Activated B cell treated with CpG ODN at 0.5 μM for 24 hours (primary cell): ENCODE measurements at regions of chr15 and their contacts with region 1.

Region 1: DNA sequence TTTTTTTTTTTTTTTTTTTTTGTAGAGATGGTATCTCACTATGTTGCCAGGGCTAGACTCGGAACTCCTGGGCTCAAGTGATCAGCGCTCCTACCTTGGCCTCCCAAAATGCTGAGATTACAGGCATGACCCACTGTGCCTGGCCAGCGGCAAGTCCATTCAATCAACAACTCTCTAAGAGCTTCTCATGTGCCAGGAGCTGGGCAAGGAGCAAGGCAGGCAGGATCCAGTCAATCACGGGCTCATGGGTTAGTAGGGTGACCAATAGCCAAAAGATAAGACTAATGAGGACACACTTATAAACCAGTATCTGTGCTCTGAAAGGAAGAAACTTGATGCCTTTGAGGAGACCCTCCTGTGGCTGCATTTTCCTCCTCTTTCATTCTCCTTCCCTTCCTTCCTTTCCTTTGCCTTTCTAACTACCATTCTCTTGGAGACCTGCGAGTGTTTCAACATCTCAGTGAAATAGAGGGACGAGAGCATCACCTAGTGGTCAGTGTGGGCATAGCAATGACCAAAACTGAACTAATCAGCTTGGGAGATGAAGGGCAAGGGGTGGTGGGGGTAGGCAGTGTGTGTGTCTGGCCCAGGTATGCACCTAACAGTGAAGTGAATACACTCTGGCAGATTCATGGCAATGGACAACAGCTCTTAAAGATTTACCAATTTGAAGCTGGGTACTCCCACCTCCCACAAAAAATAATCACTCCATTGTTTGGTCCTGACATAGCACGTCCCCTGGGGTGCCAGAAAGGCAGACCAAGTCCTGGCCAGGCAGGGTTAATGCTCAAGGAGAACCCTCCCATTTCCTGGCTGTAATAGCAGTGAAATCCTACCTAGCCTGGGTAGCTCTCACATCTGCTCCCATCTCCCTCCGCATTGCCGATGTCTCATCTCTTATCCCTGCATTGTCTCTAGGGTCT is 6.2 kb downstream of the RPP25 start:
- DNase-seq: peak; percentile 54
- ATAC-seq: peak; percentile 99
- H3K4me3 Mint-ChIP-seq: no peak overlapping the region
- H3K27ac Mint-ChIP-seq: no peak overlapping the region
- H3K4me1 Mint-ChIP-seq: peaks cover 4% of the 10 kb centered on the region
- H3K27me3 Mint-ChIP-seq: no peaks in the 10 kb centered on the region
- CTCF ChIP-seq: peak; percentile 24

Region 2: GRCh38 chr15:74799856-74800547 is 150.3 kb before region 1 on chr15:
- CTCF ChIA-PET with region 1: interaction called, 16 read pairs
- POLR2A ChIA-PET with region 1: no interaction called
- intact Hi-C with region 1: no loop called
- DNase-seq: peak; percentile 88
- ATAC-seq: peak; percentile 89
- H3K4me3 Mint-ChIP-seq: peak overlapping the region; percentile 41
- H3K27ac Mint-ChIP-seq: peak overlapping the region; percentile 89
- H3K4me1 Mint-ChIP-seq: peaks cover 64% of the 10 kb centered on the region
- H3K27me3 Mint-ChIP-seq: no peaks in the 10 kb centered on the region
- CTCF ChIP-seq: peak; percentile 67

Region 3: GRCh38 chr15:74835307-74835823 is 115.0 kb before region 1 on chr15:
- CTCF ChIA-PET with region 1: interaction called, 3 read pairs
- POLR2A ChIA-PET with region 1: no interaction called
- intact Hi-C with region 1: loop called (anchors 2 kb)
- DNase-seq: peak; percentile 47
- ATAC-seq: peak; percentile 71
- H3K4me3 Mint-ChIP-seq: no peak overlapping the region
- H3K27ac Mint-ChIP-seq: no peak overlapping the region
- H3K4me1 Mint-ChIP-seq: peaks cover 11% of the 10 kb centered on the region
- H3K27me3 Mint-ChIP-seq: no peaks in the 10 kb centered on the region
- CTCF ChIP-seq: no peak

Region 4: DNA sequence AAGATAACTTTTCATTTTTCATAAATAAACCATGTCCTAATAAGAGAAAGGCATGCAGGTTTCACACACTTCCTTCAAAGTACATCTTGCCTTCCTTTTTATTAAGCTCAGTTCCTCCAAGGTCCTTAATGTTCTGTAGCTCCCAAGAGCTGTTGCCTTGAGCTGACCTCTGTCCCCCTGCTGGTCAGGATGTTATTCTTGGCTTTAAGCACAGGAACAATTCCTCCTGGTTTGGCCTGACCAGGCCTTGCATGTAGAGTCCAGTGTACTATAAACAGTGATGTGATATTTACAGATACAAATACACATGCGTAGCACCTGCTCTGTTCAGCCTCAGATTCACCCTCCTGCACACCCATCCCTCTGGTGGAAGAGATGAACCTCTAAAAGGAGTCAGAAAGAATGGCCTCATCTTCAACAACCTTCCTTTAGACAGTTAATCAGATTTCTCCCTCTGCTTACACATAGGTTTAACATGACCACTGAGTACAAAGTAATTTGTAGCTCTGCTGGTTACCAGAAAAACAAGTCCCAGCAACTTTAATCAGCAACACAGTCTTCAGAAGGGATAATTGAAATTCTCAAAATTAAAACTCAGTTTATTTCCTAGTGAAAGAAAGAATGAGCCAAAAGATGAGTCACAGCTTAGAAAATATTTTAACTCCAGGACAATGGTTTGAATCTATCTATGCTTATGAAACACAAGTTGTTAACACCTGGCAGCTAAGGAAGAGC is 582.2 kb after region 1 on chr15:
- CTCF ChIA-PET with region 1: no interaction called
- POLR2A ChIA-PET with region 1: no interaction called
- intact Hi-C with region 1: no loop called
- DNase-seq: no peak
- ATAC-seq: no peak
- H3K4me3 Mint-ChIP-seq: no peak overlapping the region
- H3K27ac Mint-ChIP-seq: no peak overlapping the region
- H3K4me1 Mint-ChIP-seq: no peaks in the 10 kb centered on the region
- H3K27me3 Mint-ChIP-seq: no peaks in the 10 kb centered on the region
- CTCF ChIP-seq: no peak